ENCODE measurements at regions of chr5 and their contacts with region 1.

Region 1: DNA sequence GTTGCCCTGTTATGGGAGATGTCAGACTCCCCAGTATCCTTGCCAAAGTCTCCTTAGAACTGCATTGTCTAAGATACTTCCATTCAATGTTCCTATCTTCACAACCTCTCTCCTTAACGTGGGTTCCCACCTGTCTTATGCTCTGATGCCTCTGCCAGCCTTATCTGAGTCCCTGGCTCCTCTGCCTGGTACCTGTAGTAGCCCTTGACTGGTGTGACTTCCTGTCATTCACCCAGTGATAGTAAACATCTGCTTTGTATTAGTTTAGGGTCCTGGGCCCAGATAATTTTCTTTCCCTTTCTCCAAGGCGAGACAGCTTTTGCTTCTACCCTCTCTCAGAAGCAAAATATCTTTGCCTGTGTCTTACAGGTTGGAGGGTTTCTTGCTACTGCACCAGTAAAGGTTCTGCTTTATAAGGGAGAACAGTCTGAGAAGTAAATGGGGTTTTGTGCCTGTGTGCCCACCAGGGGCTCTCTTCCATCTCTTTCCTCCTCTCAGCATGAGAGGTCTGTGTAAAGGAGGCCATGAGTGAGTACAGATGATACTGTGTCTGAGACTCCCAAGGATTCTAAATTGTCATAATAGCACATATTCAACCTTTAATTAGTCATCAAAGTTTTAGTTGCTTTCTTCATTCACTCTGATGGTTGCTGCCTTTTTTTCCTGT is 220.8 kb downstream of the PRR16 start:
- DNase-seq: peak; percentile 18
- H3K4me3 Mint-ChIP-seq: no peak overlapping the region
- H3K27ac Mint-ChIP-seq: no peak overlapping the region
- H3K4me1 Mint-ChIP-seq: peaks cover 10% of the 10 kb centered on the region
- H3K27me3 Mint-ChIP-seq: no peaks in the 10 kb centered on the region
- CTCF ChIP-seq: no peak

Region 2: DNA sequence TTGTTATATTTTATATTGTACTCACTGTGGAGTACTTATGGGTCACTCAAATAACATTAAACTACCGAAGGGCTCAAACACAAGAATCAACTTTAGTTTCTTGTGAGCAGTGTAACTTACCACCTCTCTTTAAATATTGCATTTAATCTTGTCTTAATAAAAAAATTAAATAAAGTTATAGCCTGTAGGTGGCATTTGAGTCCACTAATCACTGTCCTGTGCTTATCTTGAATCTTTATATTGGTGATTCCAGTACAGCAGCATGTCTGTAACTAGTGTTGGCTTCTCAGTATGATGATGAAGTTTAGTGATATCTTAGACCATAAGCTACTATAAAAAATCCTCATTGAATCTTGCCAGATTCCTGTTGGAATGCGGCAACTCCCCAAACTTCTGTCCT is 741.7 kb before region 1 on chr5:
- CTCF ChIA-PET with region 1: no interaction called
- POLR2A ChIA-PET with region 1: no interaction called
- intact Hi-C with region 1: loop called (anchors 1 kb)
- DNase-seq: peak; percentile 33
- H3K4me3 Mint-ChIP-seq: no peak overlapping the region
- H3K27ac Mint-ChIP-seq: no peak overlapping the region
- H3K4me1 Mint-ChIP-seq: peaks cover 11% of the 10 kb centered on the region
- H3K27me3 Mint-ChIP-seq: no peaks in the 10 kb centered on the region
- CTCF ChIP-seq: peak; percentile 34

Region 3: DNA sequence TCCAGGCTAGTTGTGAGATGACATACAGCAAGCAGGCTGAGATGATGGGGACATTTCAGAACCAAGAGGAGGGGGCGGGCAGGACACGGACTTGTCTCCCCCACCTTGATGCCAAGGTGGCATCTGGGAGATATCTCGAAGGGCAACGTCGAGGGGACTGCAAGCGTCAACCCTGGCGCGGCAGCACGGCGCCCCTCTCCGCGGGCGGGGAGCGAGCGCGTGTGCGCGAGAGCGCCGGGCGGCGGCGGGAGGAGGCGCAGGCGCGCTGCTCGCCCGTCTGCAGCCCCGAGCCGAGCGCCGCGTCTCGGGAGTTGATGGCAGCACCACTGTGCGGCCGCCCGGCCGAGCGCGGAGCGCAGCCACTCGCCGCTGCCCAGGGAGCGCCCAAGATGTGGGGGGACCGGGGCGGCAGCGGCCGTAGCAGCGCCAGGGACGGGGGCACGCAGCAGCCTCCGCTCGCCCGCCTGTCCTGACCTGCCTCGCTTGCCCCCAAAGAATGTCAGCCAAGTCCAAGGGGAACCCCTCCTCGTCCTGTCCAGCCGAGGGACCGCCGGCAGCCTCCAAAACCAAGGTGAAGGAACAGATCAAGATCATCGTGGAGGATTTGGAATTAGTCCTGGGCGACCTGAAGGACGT is 220.8 kb before region 1 on chr5 and contains the start of gene PRR16:
- CTCF ChIA-PET with region 1: interaction called, 3 read pairs
- POLR2A ChIA-PET with region 1: no interaction called
- intact Hi-C with region 1: loop called (anchors 1 kb)
- DNase-seq: peak; percentile 79
- H3K4me3 Mint-ChIP-seq: peak within 1 kb of the TSS; percentile 85
- H3K27ac Mint-ChIP-seq: peak within 1 kb of the TSS; percentile 6
- H3K4me1 Mint-ChIP-seq: peaks cover 39% of the 10 kb centered on the region
- H3K27me3 Mint-ChIP-seq: no peaks in the 10 kb centered on the region
- CTCF ChIP-seq: no peak
- total RNA-seq, gene PRR16: 11.9 and 18.9 TPM in 2 replicates

Region 4: GRCh38 chr5:120586646-120587045 is 98.2 kb before region 1 on chr5:
- CTCF ChIA-PET with region 1: no interaction called
- POLR2A ChIA-PET with region 1: no interaction called
- intact Hi-C with region 1: no loop called
- DNase-seq: no peak
- H3K4me3 Mint-ChIP-seq: no peak overlapping the region
- H3K27ac Mint-ChIP-seq: no peak overlapping the region
- H3K4me1 Mint-ChIP-seq: no peaks in the 10 kb centered on the region
- H3K27me3 Mint-ChIP-seq: no peaks in the 10 kb centered on the region
- CTCF ChIP-seq: no peak

Region 5: DNA sequence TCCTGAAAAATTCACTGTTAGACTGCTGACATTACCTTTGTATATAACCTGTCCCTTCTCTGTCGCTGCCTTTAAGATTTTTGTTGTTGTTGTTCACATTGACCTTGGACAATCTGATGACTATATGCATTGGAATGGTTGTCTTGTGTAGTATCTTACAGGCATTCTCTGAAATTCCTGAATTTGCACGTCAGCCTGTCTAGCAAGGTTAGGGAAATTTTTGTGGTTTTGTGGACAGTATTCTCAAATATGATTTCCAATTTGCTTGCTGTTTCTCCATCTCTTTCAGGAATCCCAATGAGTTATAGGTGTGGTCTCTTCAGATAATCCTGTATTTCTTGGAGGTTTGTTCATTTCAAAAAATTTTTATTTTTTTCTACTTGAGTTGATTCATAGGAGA is 80.0 kb before region 1 on chr5:
- CTCF ChIA-PET with region 1: no interaction called
- POLR2A ChIA-PET with region 1: no interaction called
- intact Hi-C with region 1: loop called (anchors 2 kb)
- DNase-seq: peak; percentile 87
- H3K4me3 Mint-ChIP-seq: peak overlapping the region; percentile 8
- H3K27ac Mint-ChIP-seq: peak overlapping the region; percentile 87
- H3K4me1 Mint-ChIP-seq: peaks cover 58% of the 10 kb centered on the region
- H3K27me3 Mint-ChIP-seq: no peaks in the 10 kb centered on the region
- CTCF ChIP-seq: no peak

Region 6: GRCh38 chr5:120717381-120717780 is 32.5 kb after region 1 on chr5:
- CTCF ChIA-PET with region 1: no interaction called
- POLR2A ChIA-PET with region 1: no interaction called
- intact Hi-C with region 1: no loop called
- DNase-seq: no peak
- H3K4me3 Mint-ChIP-seq: no peak overlapping the region
- H3K27ac Mint-ChIP-seq: no peak overlapping the region
- H3K4me1 Mint-ChIP-seq: no peaks in the 10 kb centered on the region
- H3K27me3 Mint-ChIP-seq: no peaks in the 10 kb centered on the region
- CTCF ChIP-seq: no peak

Region 7: GRCh38 chr5:120866997-120867396 is 182.1 kb after region 1 on chr5:
- CTCF ChIA-PET with region 1: no interaction called
- POLR2A ChIA-PET with region 1: no interaction called
- intact Hi-C with region 1: no loop called
- DNase-seq: no peak
- H3K4me3 Mint-ChIP-seq: no peak overlapping the region
- H3K27ac Mint-ChIP-seq: no peak overlapping the region
- H3K4me1 Mint-ChIP-seq: no peaks in the 10 kb centered on the region
- H3K27me3 Mint-ChIP-seq: no peaks in the 10 kb centered on the region
- CTCF ChIP-seq: no peak

Region 8: DNA sequence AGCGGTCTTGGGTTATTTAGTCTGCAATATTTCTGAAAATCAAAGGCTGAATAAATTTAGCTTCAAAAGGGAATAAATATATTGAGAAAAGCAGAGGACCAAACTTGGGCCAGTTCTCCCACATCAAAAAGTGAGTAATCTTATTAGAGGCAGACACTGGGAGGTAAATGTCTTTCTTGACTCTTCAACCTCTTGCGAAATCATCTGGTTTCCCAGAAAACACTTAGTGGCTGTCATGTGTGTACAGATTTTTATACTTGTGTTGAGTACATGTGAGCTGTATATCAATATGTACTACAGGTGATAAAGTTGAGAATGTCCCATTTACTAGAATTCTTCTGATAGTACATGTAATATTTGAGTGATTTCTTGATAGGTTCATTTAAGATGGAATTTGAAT is 234.1 kb after region 1 on chr5:
- CTCF ChIA-PET with region 1: no interaction called
- POLR2A ChIA-PET with region 1: no interaction called
- intact Hi-C with region 1: no loop called
- DNase-seq: peak; percentile 65
- H3K4me3 Mint-ChIP-seq: no peak overlapping the region
- H3K27ac Mint-ChIP-seq: peak overlapping the region; percentile 0
- H3K4me1 Mint-ChIP-seq: peaks cover 5% of the 10 kb centered on the region
- H3K27me3 Mint-ChIP-seq: no peaks in the 10 kb centered on the region
- CTCF ChIP-seq: no peak